Activated B cell treated with CpG ODN at 0.5 μM for 24 hours (primary cell): ENCODE measurements at regions of chr10 and their contacts with region 1.

Region 1: DNA sequence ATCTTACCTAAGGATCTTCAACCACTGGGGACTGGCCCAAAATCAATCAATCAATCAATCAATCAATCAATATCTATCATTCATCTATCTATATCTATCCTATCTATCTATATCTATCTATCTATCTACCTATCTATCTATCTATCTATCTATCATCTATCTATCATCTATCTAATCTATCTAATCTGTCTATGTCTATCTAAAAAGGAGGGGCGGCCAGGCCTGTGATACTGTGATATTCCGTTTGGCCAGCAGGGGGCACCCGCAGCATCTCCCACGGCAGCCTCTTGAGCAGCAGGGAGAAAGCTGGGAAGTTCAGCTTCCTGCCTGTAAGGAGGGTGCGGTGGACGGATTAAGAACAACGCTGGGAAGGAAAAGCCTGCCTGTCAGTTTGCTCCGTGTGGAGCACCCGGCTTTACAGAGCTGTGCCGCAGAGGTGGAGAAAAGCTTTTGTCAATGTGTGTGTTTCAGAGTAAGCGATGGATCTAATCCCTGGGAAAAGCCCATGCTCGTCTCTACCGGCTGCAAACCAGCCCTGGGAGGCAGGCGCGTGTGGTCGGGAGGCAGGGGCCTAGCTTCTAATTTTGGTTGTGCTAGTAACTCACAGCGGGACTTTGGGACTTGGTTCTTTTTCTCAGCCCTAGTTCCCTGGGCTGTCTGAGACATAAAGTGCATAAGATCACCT is 125.0 kb downstream of the SH2D4B start:
- DNase-seq: peak; percentile 58
- ATAC-seq: peak; percentile 71
- H3K4me3 Mint-ChIP-seq: no peak overlapping the region
- H3K27ac Mint-ChIP-seq: no peak overlapping the region
- H3K4me1 Mint-ChIP-seq: peaks cover 2% of the 10 kb centered on the region
- H3K27me3 Mint-ChIP-seq: peaks cover 21% of the 10 kb centered on the region
- CTCF ChIP-seq: peak; percentile 97

Region 2: GRCh38 chr10:80408242-80409101 is 254.2 kb before region 1 on chr10 and contains the start of gene PRXL2A:
- CTCF ChIA-PET with region 1: no interaction called
- POLR2A ChIA-PET with region 1: no interaction called
- intact Hi-C with region 1: loop called (anchors 10 kb)
- DNase-seq: peak; percentile 87
- ATAC-seq: peak; percentile 97
- H3K4me3 Mint-ChIP-seq: peak within 1 kb of the TSS; percentile 91
- H3K27ac Mint-ChIP-seq: peak within 1 kb of the TSS; percentile 82
- H3K4me1 Mint-ChIP-seq: peaks cover 12% of the 10 kb centered on the region
- H3K27me3 Mint-ChIP-seq: peaks cover 2% of the 10 kb centered on the region
- CTCF ChIP-seq: no peak
- total RNA-seq, gene PRXL2A: 8.5 and 10.3 TPM in 2 replicates

Region 3: DNA sequence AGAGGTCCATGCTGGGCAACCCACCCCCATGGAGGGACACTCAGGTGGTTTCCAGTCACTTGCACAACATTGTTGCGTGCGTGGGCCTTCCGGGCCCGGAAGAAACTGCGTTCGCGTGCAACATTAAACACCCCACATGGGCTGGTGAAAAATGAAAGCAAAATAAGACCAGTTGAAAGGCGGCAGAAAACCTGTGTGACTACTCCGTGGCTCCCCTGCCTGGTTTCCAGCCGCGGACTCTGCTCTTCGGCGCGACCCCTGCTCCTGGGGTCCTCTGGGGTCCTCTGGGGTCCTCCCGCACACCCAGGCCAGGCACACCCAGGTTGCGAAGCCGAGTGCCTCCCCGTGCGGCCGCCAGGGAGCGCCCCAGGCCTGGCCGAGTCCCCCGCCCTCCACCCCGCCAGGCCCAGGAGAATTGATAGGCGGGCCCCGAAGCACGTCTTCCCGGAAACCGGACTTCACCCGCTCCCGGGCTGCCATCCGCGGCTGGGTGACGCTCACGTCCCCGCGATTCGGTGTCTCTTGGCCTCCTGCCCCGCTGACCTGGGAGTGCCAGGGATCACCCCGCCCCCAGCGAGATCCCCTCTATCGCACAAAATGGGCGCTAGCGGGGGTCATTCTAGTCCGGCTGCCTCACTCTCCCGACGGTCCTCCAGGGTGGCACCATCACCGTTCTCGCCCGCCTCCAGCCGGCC is 126.9 kb before region 1 on chr10:
- CTCF ChIA-PET with region 1: no interaction called
- POLR2A ChIA-PET with region 1: interaction called, 4 read pairs
- intact Hi-C with region 1: loop called (anchors 2 kb)
- DNase-seq: peak; percentile 76
- ATAC-seq: peak; percentile 89
- H3K4me3 Mint-ChIP-seq: peak overlapping the region; percentile 88
- H3K27ac Mint-ChIP-seq: peak overlapping the region; percentile 89
- H3K4me1 Mint-ChIP-seq: peaks cover 35% of the 10 kb centered on the region
- H3K27me3 Mint-ChIP-seq: no peaks in the 10 kb centered on the region
- CTCF ChIP-seq: peak; percentile 38

Region 4: DNA sequence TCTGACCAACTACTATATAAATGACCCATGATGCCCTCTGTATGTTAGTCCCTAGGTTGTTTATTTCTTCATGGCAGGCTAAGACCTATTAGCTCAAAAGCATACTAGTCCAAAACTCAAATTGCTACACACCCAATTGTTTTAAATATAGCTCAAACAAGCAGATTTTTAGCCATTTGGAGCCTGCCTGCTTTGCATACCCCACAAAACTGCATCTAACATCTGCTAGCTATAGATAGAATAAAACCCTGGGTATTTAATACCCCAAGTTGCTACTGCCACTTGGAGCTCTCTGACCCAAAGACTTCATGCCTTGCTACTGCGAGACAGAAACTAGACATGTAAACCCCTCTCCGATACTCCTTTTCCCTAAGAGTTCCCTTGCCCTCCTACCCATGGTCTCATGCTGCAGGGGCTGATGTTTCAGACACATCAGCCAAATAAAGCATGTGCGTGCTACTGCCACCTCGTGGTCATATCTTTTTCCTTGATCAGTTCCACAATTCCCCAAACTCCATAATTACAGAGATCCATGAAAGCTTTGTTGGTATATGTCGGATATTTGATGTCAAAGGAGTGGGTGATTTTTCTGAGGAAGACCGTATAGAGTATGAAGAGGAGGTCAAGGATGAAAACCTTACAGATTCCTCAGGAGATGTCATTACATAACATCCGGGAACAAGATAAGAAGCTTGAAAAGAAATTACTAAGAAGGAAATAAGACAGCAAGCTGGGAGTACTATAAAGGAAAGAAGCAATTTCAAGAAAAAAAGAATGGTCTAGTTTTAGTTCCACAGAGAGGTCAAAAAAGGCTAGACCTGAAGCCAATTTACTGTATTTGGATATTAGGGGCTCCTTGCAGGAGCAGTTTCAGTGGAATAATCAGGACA is 261.6 kb after region 1 on chr10:
- CTCF ChIA-PET with region 1: interaction called, 4 read pairs
- POLR2A ChIA-PET with region 1: no interaction called
- intact Hi-C with region 1: loop called (anchors 5 kb)
- DNase-seq: no peak
- ATAC-seq: no peak
- H3K4me3 Mint-ChIP-seq: no peak overlapping the region
- H3K27ac Mint-ChIP-seq: no peak overlapping the region
- H3K4me1 Mint-ChIP-seq: no peaks in the 10 kb centered on the region
- H3K27me3 Mint-ChIP-seq: no peaks in the 10 kb centered on the region
- CTCF ChIP-seq: no peak

Region 5: GRCh38 chr10:81018708-81019365 is 356.1 kb after region 1 on chr10:
- CTCF ChIA-PET with region 1: no interaction called
- POLR2A ChIA-PET with region 1: no interaction called
- intact Hi-C with region 1: loop called (anchors 10 kb)
- DNase-seq: no peak
- ATAC-seq: peak; percentile 25
- H3K4me3 Mint-ChIP-seq: no peak overlapping the region
- H3K27ac Mint-ChIP-seq: no peak overlapping the region
- H3K4me1 Mint-ChIP-seq: no peaks in the 10 kb centered on the region
- H3K27me3 Mint-ChIP-seq: peaks cover 2% of the 10 kb centered on the region
- CTCF ChIP-seq: no peak